Dendritic cell treated with granulocyte-macrophage colony-stimulating factor and Interleukin-4, amounts not matched to agents 40 ng/mL and 50 ng/mL, for 4 days (primary cell): ENCODE measurements at regions of chr14 and their contacts with region 1.

Region 1: DNA sequence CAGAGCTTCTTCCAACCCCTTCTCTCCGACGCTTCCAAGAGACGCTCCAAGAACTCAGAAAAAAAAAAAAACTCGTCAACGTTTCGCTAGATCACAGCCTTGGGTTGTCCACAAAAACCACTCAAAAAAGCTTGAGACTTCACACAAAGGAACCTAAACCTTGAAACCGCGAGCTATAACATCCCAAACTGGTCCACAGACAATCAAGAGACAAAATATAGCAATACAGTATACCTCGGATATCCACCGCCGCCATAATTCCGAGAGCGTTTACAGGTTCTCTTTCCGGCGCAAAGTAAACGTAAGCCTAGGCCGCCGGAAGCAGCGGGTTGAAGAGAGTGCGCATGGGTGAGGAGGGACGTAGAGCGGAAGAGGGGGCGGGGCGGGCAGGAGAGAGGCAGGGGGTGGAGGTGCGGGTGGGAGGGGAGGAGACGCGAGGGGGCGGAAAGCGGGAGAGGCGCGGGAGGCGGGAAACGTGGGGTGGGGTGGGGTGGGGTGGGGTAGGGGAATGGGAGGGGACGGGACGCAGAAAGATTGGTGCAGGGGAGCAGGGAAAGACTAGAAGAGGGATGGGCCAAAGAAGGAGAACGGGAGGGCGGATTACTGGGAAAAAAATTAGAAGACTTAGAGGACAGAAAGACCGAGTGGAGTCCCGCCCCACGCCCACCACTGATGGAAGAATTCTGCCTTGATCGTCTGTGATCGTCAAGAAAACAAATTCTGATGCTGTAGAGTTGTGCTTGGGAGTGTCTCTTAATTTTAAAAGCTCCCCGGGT is at the start of gene MED6:
- H3K4me3 Mint-ChIP-seq: peak within 1 kb of the TSS; percentile 93
- H3K27ac Mint-ChIP-seq: peak within 1 kb of the TSS; percentile 97
- H3K4me1 Mint-ChIP-seq: peaks cover 16% of the 10 kb centered on the region
- H3K27me3 Mint-ChIP-seq: peaks cover 16% of the 10 kb centered on the region

Region 2: DNA sequence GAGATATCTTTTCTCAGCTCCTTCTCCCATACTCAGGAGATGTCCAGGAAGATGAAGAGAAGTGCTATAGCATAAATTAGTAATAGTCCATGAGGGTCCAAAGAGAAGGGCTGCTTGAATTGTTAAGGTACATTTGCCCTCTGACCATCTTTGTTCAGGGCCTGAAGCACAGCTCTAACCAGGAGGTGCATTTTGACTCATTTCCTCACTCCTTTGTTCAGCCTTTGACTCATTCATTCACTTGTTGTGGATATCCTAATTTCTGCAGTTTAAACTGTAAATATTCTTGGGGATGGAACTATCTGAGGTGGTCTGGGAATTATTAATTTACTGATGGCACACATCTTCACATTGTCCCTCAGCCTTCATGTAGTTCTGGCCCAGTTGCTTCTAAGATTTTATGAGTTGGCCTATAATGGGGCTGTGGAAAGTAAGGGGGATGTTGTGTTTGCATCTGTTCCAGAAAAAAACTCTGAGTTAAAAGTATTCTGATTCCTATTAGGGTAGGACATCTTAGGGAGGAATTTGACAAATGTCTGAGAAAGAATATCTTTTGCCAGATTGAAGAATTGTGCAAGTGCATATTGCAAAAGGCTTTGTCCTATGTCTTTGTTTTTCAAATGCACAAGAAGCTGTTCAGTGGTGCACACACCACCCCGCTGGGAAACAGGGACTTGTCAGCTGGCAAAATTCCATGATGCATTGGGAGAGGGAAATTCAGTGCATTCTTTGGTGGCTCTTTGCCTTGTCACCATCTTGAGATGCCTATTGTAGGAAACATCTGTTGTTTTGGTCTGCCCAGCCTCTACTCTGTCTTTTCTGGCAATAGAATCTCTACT is 699.2 kb before region 1 on chr14:
- intact Hi-C with region 1: no loop called
- H3K4me3 Mint-ChIP-seq: no peak overlapping the region
- H3K27ac Mint-ChIP-seq: no peak overlapping the region
- H3K4me1 Mint-ChIP-seq: no peaks in the 10 kb centered on the region
- H3K27me3 Mint-ChIP-seq: no peaks in the 10 kb centered on the region

Region 3: DNA sequence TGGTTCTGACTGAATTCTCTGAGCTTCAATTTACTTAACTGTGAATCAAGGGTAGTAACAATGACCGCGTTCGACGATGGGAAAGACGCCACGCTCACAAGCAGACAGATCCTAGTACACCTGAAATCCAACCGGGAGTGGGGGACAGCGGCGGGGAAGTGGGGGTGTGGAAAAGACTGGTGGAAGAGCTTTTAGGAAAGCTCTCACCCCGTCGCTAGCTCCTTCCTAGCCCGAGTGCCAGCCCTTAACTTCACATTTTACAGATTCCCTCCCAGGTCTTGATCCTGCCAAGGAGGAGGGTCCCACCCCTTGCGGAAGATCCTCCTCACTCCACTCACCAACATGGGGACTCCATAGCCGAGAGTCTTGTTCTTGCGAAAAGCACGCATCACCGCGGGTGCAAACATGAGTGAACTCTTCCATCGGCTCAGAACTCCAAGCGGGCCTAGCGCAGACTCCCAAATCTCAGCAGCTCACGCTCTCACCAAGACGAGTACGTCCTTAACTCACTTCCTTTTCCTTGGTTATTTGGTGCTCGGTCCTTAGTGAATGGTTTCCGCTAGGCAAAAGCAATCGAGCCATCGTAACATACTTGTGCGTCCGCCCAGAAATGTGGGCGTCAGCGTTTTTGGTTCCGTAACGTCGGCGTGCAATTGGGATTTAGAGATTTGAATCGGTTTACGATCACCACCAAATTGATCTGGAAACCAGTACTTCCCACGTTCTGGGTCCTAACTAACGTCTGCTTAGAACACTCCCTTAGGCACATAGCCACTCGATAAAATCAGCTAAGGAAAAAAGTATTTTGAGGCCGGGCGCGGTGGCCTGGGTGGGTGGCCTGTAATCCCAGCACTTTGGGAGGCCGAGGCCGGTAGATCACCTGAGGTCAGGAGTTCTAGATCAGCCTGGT is 241.1 kb before region 1 on chr14 and contains the start of gene COX16:
- intact Hi-C with region 1: loop called (anchors 5 kb)
- H3K4me3 Mint-ChIP-seq: peak within 1 kb of the TSS; percentile 94
- H3K27ac Mint-ChIP-seq: peak within 1 kb of the TSS; percentile 92
- H3K4me1 Mint-ChIP-seq: peaks cover 15% of the 10 kb centered on the region
- H3K27me3 Mint-ChIP-seq: peaks cover 26% of the 10 kb centered on the region

Region 4: DNA sequence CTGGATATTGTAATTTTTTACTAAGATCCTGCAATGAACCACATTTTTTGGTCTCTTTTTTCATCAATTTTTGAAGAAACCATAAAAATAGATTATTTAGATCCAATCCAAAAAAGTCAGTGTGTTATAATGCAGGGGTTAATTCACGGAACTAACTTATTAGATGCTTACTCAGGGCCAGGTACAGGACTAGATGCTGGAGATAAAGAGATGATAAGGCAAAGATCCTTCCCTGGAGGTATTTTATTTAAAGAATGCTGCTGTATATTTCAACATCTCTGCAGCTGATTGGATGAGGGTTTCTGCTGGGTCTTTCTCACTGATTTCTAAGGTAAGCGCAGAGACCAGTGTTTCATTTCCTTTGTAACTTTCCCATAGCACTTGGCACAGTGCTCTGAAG is 217.6 kb before region 1 on chr14:
- intact Hi-C with region 1: no loop called
- H3K4me3 Mint-ChIP-seq: no peak overlapping the region
- H3K27ac Mint-ChIP-seq: no peak overlapping the region
- H3K4me1 Mint-ChIP-seq: no peaks in the 10 kb centered on the region
- H3K27me3 Mint-ChIP-seq: no peaks in the 10 kb centered on the region

Region 5: DNA sequence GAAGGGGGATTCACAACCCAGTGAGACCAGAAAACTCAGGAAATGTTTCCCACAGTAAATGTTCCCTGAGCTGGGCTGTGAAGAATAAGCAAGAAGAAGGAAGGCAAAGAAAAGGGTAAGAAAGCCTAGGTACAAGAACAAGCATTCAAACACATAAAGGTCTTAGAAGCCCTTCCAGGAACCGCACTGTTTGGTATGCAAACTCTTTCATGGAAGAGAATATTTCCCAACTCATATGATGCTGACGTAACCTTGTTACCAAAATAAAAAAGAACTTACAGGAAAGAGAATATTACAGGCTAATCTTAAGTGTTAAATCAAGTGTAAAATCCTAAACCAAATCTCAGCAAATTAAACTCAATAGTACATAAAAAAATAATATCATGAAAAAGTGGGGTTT is 23.7 kb before region 1 on chr14:
- intact Hi-C with region 1: no loop called
- H3K4me3 Mint-ChIP-seq: no peak overlapping the region
- H3K27ac Mint-ChIP-seq: no peak overlapping the region
- H3K4me1 Mint-ChIP-seq: no peaks in the 10 kb centered on the region
- H3K27me3 Mint-ChIP-seq: no peaks in the 10 kb centered on the region